Left lung (tissue), 14 donors: ENCODE measurements at regions of chr9 and their contacts with region 1.

Region 1: DNA sequence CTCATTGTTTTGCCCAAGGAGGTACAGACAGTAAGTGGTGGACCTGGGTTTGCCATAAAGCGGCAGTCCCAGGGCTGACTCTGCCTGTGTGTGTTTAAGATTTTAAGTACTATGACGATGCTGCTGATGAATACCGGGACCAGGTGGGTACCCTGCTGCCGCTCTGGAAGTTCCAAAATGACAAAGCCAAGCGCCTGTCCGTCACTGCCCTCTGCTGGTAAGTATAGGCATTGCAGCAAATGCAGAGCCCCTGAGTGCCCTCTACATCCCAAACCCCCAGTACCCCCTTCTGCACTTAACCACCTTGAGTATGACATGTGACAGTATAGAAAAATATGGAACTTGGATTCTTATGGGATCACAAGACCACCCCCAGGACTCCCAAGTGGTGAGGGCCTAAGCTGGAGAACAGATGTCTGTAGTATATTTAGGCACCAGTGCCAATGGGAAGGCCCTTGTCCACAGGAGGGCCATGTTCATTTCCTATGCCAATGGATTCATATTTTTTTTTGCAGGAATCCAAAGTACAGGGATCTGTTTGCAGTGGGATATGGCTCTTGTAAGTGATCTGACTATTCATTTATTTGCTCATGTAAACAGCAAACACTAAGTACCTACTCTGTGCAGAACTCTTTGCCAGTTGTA is 22.0 kb downstream of the ENHO start:
- DNase-seq: peak in 2 of 4 donors; percentile 47 to 57
- ATAC-seq: peak; percentile 69
- H3K4me3 ChIP-seq: no peak overlapping the region
- H3K27ac ChIP-seq: no peak overlapping the region
- H3K4me1 ChIP-seq: peaks cover 6 to 12% of the 10 kb centered on the region in 2 donors
- H3K27me3 ChIP-seq: no peaks in the 10 kb centered on the region
- CTCF ChIP-seq: peak; percentile 97 to 98

Region 2: DNA sequence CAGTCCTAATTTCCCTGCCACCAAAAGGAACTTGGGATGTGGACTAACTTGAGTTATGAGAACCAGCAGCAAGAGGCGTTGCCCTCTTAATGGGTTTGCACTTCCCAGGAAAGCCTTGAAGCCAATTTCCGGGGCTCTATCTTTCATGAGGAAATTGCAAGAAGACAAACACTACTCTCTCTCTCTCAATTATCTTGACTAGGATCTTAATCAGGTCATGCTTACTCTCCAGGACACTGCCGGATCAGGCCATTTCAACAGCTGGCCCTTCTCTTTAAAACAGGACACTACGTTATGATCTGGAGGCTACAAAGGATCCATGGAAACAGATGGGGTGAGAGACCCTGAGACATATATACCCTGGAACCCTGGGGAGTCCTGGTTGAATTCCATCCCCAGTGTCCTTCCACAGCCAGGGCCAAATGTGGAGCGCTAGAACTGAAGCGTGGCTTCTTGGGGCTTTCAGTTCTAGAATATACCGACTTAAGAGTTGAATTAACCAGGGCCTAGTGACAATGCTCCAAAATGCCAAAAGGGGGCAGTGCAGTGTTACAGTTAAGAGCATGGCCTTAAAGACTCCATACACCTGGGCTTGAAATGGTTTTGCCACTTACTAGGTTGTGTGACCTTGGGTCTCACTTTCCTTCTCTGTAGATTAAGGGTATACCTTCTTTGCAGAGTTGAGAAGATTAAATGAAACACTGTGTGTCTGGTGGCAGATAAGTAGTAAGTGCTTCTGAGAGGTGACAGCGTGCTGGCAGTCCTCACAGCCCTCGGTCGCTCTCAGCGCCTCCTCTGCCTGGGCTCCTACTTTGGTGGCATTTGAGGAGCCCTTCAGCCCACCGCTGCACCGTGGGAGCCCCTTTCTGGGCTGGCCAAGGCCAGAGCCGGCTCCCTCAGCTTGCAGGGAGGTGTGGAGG is 63.5 kb before region 1 on chr9:
- intact Hi-C with region 1: loop called in 1 of 2 experiments (anchors 5 kb)
- DNase-seq: peak in 1 of 4 donors; percentile 75
- ATAC-seq: peak; percentile 93
- H3K4me3 ChIP-seq: no peak overlapping the region
- H3K27ac ChIP-seq: no peak overlapping the region
- H3K4me1 ChIP-seq: peaks cover 11 to 22% of the 10 kb centered on the region in 2 donors
- H3K27me3 ChIP-seq: no peaks in the 10 kb centered on the region
- CTCF ChIP-seq: peak; percentile 60 to 71